Calu3 (cell line): ENCODE measurements at regions of chr1 and their contacts with region 1.

Region 1: DNA sequence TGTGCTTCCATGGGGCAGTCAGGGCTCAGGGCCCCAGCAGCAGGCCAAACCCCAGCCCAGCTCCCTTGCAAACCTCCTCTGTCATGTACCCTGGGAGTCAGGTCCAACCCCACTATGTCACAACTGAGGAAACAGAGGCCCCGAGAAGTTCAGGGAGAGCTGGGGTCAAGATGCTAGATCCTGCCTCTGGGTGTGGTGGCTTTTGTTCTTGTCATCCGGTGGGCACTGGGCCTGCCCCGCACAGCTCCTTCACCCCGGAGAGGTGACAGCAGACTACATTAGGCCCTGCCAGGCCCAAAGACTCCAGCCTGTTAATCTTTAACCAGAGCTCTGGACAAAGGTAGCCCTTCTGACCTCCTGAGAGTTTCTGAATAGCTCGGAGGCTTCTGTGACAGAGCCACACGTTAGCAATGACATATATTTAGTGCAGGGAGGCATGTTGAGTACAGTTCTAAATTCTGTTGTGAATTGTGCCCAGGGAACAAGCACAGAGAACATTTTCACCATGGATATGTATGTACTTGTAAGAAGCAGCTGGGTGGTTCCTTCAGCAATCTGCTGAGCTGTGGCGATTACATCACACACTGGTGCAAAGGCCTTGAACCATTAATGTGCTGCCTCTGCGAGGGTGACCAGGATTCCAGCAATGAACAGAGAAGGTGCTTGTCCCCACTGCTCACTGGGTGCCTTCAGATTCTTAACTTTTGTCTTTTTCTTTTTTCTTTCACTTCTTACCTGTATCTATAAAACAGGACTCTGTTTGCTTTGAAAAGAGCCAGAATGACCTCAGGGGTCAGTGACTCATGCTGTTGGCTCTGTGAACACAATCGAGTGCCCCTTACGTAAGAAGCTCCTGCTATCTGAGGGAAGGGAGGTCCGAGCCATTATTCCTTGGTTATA is 102.8 kb downstream of the RHOU start:
- DNase-seq: peak; percentile 87
- H3K4me3 Mint-ChIP-seq: peak overlapping the region; percentile 63
- H3K27ac Mint-ChIP-seq: peak overlapping the region; percentile 92
- H3K4me1 Mint-ChIP-seq: peaks cover 72% of the 10 kb centered on the region
- H3K27me3 Mint-ChIP-seq: no peaks in the 10 kb centered on the region
- CTCF ChIP-seq: no peak

Region 2: GRCh38 chr1:228849011-228849541 is 11.0 kb after region 1 on chr1:
- CTCF ChIA-PET with region 1: interaction called, 14 read pairs
- intact Hi-C with region 1: no loop called
- DNase-seq: no peak
- H3K4me3 Mint-ChIP-seq: no peak overlapping the region
- H3K27ac Mint-ChIP-seq: no peak overlapping the region
- H3K4me1 Mint-ChIP-seq: peaks cover 39% of the 10 kb centered on the region
- H3K27me3 Mint-ChIP-seq: no peaks in the 10 kb centered on the region
- CTCF ChIP-seq: no peak

Region 3: DNA sequence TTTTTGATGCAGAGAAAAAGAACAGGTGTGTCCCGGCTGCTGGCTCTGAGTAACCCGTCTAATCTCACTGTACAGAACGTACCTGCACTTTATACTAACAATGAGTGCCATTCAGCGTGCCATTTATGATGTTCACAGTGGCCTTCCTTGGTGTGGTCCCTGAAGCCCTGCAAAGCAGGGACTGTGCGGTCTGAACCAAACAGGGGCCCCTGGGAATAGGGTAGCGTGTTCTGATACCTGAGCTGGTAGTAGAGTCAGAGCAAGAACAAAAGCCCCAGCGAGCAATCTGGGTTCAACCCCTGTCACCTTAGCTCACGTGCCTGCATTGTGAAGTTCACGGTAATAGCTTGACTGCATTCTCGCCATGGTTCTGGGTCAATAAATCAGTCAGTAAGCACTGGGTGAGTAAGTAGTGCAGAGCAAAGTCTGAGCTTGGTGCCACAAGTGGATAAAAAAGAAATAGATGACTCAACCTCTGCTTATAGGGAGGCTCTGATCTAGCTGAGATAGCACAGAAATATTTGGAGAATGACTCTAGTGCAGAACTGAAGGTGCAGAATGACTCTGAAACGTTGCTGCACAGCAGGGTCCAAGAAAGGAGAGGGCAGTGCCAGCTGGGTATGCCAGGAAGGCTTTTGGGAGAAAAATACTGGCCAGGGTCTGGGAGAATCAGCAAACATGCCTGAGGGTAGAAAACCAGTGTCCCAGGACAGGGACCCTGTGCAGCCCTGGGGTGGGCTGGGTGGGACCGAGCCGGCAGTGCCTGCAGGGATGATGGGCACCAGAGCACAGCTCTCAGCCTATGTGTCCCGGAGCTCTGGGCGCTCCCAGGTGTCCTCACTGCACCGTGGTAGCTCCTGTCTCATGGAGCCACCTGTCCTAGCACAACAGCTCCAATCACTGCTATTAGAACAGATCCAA is 23.1 kb after region 1 on chr1:
- CTCF ChIA-PET with region 1: interaction called, 11 read pairs
- intact Hi-C with region 1: loop called (anchors 2 kb)
- DNase-seq: peak; percentile 73
- H3K4me3 Mint-ChIP-seq: peak overlapping the region; percentile 15
- H3K27ac Mint-ChIP-seq: peak overlapping the region; percentile 46
- H3K4me1 Mint-ChIP-seq: peaks cover 56% of the 10 kb centered on the region
- H3K27me3 Mint-ChIP-seq: no peaks in the 10 kb centered on the region
- CTCF ChIP-seq: no peak

Region 4: DNA sequence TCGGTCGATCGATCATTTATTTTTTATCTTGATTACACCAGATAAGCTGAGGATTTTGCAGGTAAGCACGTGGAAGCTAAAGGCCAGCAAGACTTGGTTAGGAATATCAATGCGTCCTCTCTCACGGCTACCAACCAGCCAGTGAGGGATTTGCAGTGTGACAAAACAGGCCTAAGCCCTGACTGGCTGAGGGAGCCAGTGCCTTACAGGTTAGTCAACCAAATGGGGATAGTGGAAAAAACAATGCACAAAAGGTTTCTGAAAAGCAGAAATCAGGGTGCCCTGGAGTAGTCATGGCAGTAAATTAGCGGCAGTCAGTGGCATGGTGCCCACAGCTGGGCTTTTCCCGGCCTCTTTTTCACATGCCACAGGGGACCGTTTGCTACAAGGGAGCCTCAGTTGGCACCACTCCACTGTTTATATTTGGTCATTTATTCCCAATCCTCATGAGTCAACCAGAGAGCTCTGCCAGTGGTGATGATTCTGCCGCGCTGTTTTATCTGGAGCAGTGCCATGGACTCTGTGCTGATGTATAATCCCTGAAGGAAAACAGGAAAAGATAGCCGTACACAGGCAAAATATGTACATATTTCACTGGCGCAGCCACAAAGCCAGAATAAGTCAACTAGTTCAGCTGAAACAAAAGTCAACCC is 64.8 kb after region 1 on chr1:
- CTCF ChIA-PET with region 1: interaction called, 3 read pairs
- intact Hi-C with region 1: loop called (anchors 10 kb)
- DNase-seq: peak; percentile 86
- H3K4me3 Mint-ChIP-seq: no peak overlapping the region
- H3K27ac Mint-ChIP-seq: no peak overlapping the region
- H3K4me1 Mint-ChIP-seq: peaks cover 22% of the 10 kb centered on the region
- H3K27me3 Mint-ChIP-seq: peaks cover 15% of the 10 kb centered on the region
- CTCF ChIP-seq: no peak

Region 5: DNA sequence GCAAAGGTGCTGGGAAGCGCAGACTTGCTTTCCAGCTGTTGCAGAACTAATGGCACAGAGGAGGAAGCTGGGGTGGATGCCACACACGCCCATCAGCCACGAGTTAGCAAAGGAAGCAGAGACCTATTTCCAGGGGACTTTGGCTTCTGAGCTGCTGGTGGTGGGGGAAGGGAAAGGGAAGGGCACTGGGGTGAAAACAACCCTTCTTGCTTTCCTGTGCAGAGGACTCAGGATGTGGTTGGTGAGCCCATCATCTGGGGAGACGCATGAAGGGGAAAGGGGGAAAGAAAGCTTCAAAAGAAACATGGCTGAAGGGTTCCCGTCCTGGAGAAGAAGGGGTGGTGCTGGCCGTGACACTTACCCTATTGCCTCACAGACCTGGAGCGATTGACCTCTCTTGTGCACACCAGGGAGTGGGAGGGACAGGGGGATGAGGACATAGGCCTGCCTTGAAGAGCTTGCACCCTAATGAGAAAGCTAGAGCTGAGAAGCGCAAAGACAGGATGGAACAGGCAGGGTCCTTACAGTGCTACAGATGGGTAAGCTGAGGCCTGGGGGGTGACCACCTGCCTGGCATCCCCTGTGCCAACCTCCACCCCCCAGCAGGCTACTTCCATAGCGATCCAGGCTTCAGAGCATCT is 292.1 kb after region 1 on chr1:
- CTCF ChIA-PET with region 1: no interaction called
- intact Hi-C with region 1: loop called (anchors 10 kb)
- DNase-seq: no peak
- H3K4me3 Mint-ChIP-seq: no peak overlapping the region
- H3K27ac Mint-ChIP-seq: peak overlapping the region; percentile 98
- H3K4me1 Mint-ChIP-seq: peaks cover 89% of the 10 kb centered on the region
- H3K27me3 Mint-ChIP-seq: no peaks in the 10 kb centered on the region
- CTCF ChIP-seq: no peak